B cell (primary cell): ENCODE measurements at regions of chr9 and their contacts with region 1.

Region 1: GRCh38 chr9:122562134-122562760 is 9.3 kb downstream of the OR1N2 start:
- DNase-seq: no peak
- ATAC-seq: no peak
- H3K4me3 ChIP-seq: no peak overlapping the region
- H3K4me3 Mint-ChIP-seq: no peak overlapping the region
- H3K27ac ChIP-seq: no peak overlapping the region
- H3K27ac Mint-ChIP-seq: no peak overlapping the region
- H3K4me1 ChIP-seq: no peaks in the 10 kb centered on the region
- H3K4me1 Mint-ChIP-seq: no peaks in the 10 kb centered on the region
- H3K27me3 ChIP-seq: peaks cover 0 to 12% (median 3%) of the 10 kb centered on the region in 4 experiments
- H3K27me3 Mint-ChIP-seq: peaks cover 45% of the 10 kb centered on the region
- CTCF ChIP-seq: no peak

Region 2: DNA sequence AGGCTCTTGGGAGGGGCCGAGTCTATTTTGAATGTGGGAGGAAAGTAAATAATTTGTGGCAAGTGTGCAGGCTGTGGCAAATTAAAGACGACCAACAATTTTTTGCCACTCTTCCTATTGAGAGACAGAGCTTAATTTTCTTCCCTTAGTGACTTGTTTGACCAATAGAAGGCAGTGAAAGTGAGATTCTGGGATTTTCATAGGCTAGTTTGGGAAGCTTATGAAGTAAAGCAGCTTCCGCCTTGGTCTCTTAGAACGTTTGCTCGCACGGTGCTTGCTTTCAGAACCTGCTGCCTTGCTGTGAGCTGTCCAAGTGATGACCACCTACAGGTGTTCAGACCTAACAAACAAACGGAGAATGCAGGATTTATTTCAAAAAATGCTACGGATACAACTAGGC is 16.1 kb before region 1 on chr9:
- CTCF ChIA-PET with region 1: no interaction called
- POLR2A ChIA-PET with region 1: no interaction called
- intact Hi-C with region 1: loop called (anchors 1 kb)
- DNase-seq: no peak
- ATAC-seq: no peak
- H3K4me3 ChIP-seq: no peak overlapping the region
- H3K4me3 Mint-ChIP-seq: no peak overlapping the region
- H3K27ac ChIP-seq: no peak overlapping the region
- H3K27ac Mint-ChIP-seq: no peak overlapping the region
- H3K4me1 ChIP-seq: no peaks in the 10 kb centered on the region
- H3K4me1 Mint-ChIP-seq: no peaks in the 10 kb centered on the region
- H3K27me3 ChIP-seq: peaks cover 0 to 8% (median 2%) of the 10 kb centered on the region in 4 experiments
- H3K27me3 Mint-ChIP-seq: peaks cover 35% of the 10 kb centered on the region
- CTCF ChIP-seq: no peak